Mammary epithelial cell (primary cell): ENCODE measurements at regions of chrX and their contacts with region 1.

Region 1: DNA sequence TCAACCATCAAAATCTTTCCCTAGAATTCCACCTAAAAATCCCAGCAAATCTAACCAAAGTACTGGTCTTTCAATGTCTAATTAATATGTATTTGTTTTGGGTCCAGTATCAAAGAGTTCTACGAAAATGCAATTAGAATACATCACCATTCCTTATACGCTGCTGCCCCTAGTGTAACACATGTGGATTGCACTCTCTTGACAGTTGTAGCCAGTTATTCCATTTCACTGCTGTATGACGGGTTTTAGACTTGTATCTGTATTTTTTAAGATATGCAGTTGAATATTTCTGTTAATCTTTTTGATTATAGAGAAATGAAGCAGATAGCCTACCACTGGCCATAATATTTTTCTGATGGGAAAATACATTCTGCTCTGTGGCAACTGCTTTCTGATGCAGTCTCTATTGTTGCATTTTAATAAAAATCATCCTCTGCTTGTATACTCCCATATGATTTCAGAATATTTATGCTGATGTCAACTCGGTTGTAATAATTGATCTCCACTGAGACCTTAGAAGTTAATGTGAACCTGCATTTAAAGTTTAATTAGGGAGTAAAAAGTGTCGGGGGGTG is 17.1 kb upstream of the PAGE2B start:
- DNase-seq: peak; percentile 9
- H3K4me3 ChIP-seq: no peak overlapping the region
- H3K27ac ChIP-seq: no peak overlapping the region
- H3K4me1 ChIP-seq: no peaks in the 10 kb centered on the region
- H3K27me3 ChIP-seq: peaks cover 8% of the 10 kb centered on the region
- CTCF ChIP-seq: peak; percentile 82 to 92

Region 2: GRCh38 chrX:54413753-54414152 is 644.0 kb before region 1 on chrX:
- CTCF ChIA-PET with region 1: no interaction called
- dilution Hi-C with region 1: no loop called
- in situ Hi-C with region 1: no loop called
- intact Hi-C with region 1: no loop called
- DNase-seq: no peak
- H3K4me3 ChIP-seq: no peak overlapping the region
- H3K27ac ChIP-seq: no peak overlapping the region
- H3K4me1 ChIP-seq: no peaks in the 10 kb centered on the region
- H3K27me3 ChIP-seq: peaks cover 2% of the 10 kb centered on the region
- CTCF ChIP-seq: no peak

Region 3: DNA sequence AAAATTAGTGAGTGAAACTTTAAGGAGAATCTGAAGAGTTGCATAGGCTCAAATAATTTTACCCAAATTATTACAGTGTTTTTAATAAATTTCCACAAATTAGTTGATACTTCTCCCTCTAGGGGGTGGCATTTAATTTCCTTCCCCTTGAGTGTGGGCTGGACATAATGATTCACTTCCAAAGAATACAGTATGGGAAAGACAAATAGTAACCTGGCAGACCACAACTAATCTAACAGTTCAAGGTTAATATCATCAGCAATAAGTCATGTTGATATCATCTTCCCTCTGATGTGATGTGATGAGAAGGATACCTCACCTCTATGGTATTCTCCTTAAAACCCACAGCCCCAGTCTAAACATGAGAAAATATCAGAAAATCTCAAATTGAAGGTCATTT is 79.3 kb before region 1 on chrX:
- CTCF ChIA-PET with region 1: no interaction called
- dilution Hi-C with region 1: no loop called
- in situ Hi-C with region 1: no loop called
- intact Hi-C with region 1: loop called (anchors 1 kb)
- DNase-seq: peak; percentile 41
- H3K4me3 ChIP-seq: no peak overlapping the region
- H3K27ac ChIP-seq: no peak overlapping the region
- H3K4me1 ChIP-seq: no peaks in the 10 kb centered on the region
- H3K27me3 ChIP-seq: peaks cover 2% of the 10 kb centered on the region
- CTCF ChIP-seq: peak; percentile 13 to 19

Region 4: GRCh38 chrX:55088795-55089489 is 31.2 kb after region 1 on chrX and contains the start of gene PAGE2:
- CTCF ChIA-PET with region 1: no interaction called
- dilution Hi-C with region 1: no loop called
- in situ Hi-C with region 1: no loop called
- intact Hi-C with region 1: no loop called
- DNase-seq: no peak
- H3K4me3 ChIP-seq: no peak within 1 kb of the TSS
- H3K27ac ChIP-seq: no peak within 1 kb of the TSS
- H3K4me1 ChIP-seq: no peaks in the 10 kb centered on the region
- H3K27me3 ChIP-seq: no peaks in the 10 kb centered on the region
- CTCF ChIP-seq: no peak
- total RNA-seq, gene PAGE2: not detected

Region 5: GRCh38 chrX:55290963-55291362 is 233.2 kb after region 1 on chrX:
- CTCF ChIA-PET with region 1: no interaction called
- dilution Hi-C with region 1: no loop called
- in situ Hi-C with region 1: no loop called
- intact Hi-C with region 1: no loop called
- DNase-seq: no peak
- H3K4me3 ChIP-seq: no peak overlapping the region
- H3K27ac ChIP-seq: no peak overlapping the region
- H3K4me1 ChIP-seq: no peaks in the 10 kb centered on the region
- H3K27me3 ChIP-seq: no peaks in the 10 kb centered on the region
- CTCF ChIP-seq: no peak